Activated T-helper 2 cell treated with anti-CD3 and anti-CD28 coated beads, Interferon-gamma antibody, Interleukin-2, Interleukin-4, amounts not matched to agents 10 μg/mL and 5 μg/mL and 100 μg/mL, durations not matched to agents 14 hours and 24 hours and 36 hours (primary cell): ENCODE measurements at regions of chr2 and their contacts with region 1.

Region 1: GRCh38 chr2:27191053-27191829 is 20.6 kb upstream of the ATRAID start:
- DNase-seq: peak; percentile 35
- H3K4me3 Mint-ChIP-seq: no peak overlapping the region
- H3K27ac Mint-ChIP-seq: no peak overlapping the region
- H3K4me1 Mint-ChIP-seq: no peaks in the 10 kb centered on the region
- H3K27me3 Mint-ChIP-seq: peaks cover 6% of the 10 kb centered on the region

Region 2: GRCh38 chr2:26521054-26521912 is 670.0 kb before region 1 on chr2:
- intact Hi-C with region 1: no loop called
- DNase-seq: no peak
- H3K4me3 Mint-ChIP-seq: no peak overlapping the region
- H3K27ac Mint-ChIP-seq: no peak overlapping the region
- H3K4me1 Mint-ChIP-seq: peaks cover 8% of the 10 kb centered on the region
- H3K27me3 Mint-ChIP-seq: peaks cover 8% of the 10 kb centered on the region

Region 3: DNA sequence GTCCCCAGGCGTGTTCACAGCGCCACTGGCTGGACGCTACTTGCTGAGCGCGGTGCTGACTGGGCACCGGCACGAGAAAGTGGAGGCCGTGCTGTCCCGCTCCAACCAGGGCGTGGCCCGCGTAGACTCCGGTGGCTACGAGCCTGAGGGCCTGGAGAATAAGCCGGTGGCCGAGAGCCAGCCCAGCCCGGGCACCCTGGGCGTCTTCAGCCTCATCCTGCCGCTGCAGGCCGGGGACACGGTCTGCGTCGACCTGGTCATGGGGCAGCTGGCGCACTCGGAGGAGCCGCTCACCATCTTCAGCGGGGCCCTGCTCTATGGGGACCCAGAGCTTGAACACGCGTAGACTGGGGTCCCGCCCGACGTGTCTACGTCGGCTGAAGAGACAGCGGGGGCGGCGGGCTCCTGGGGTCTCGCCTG is 105.6 kb before region 1 on chr2:
- intact Hi-C with region 1: no loop called
- DNase-seq: no peak
- H3K4me3 Mint-ChIP-seq: peak overlapping the region; percentile 90
- H3K27ac Mint-ChIP-seq: peak overlapping the region; percentile 46
- H3K4me1 Mint-ChIP-seq: peaks cover 26% of the 10 kb centered on the region
- H3K27me3 Mint-ChIP-seq: no peaks in the 10 kb centered on the region

Region 4: DNA sequence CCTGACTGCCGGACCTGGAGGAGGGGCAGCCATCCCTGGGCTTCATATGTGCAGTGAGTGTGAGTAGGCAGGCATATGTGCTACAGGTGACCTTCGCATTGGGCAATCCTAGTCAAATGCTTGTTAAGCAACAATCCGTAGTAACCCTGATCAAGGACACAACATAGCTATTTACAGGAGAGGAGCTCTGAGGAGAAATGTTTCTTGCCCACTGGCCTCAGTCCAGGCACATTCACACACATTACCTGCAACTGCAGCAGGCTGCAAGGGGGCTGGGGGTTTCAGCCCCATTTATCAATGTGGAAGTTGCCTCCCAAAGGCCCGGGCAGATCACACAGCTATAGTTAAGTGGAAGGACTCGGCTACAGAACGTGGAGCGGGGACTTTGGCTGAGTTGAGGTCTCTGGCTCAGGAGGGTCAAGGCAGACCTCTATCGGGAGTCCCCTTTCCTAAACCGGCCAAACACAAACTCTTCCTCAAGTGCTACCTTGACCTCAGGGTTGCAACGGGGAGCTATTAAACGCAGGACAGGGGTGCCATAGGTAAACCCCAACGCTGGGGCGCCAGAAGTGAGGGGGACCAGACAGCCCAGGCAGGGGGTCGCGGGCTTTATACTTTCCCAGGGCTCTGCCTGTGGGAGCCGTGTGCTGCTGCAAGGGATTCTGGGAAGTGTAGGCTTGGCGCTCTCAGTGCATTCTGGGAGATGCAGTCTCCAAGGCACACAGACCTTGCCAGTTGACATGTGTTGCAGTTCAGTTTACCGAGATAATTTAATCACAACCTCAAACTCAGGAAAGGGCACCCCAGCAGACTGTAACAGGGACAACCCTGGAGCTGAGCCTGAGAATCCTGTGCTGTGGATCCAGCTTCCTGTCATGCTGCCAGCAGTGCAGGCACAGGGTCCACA is 95.2 kb before region 1 on chr2:
- intact Hi-C with region 1: loop called (anchors 5 kb)
- DNase-seq: no peak
- H3K4me3 Mint-ChIP-seq: peak overlapping the region; percentile 51
- H3K27ac Mint-ChIP-seq: peak overlapping the region; percentile 24
- H3K4me1 Mint-ChIP-seq: peaks cover 9% of the 10 kb centered on the region
- H3K27me3 Mint-ChIP-seq: no peaks in the 10 kb centered on the region